HEK293 (cell line): ENCODE measurements at regions of chr22 and their contacts with region 1.

Region 1: DNA sequence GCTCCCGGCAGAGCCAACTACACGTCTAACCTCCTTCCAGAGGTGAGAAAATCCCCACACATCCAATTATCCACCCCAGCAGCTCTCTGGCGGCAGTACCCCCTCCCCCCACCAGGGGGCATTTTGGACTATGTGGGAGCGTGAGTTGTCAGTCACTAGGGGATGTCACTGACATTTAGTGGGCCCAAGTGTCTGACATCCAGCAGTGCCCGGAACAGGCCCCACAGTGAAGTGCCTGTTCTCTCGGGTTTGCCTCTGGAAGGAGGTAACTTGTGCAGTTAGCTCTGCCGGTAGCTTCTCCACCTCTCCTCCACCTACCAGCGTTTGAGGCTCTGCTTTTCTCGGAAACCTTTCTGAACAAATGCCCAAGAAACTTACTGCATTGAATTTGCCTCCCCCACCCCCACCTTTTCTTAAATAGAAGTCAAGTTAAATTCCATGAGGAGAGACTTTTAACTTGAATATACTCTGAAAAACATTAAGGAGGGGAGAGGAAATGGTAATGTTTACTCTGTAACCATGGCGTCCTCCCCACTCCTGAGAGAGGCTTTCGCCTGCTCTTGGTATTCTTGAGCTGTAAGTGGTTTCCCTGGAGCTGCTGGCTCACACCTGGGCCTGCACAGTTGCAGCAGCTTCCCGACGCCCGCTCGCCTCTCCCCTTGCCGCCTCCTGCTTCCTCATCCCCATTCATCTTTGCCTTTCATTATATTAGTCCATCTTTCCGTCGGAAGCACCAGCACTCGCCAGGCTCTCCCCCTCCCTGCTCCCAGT is 112.8 kb downstream of the WNT7B start:
- H3K4me3 ChIP-seq: no peak overlapping the region
- H3K27ac ChIP-seq: no peak overlapping the region
- H3K4me1 ChIP-seq: no peaks in the 10 kb centered on the region
- CTCF ChIP-seq: peak; percentile 83

Region 2: DNA sequence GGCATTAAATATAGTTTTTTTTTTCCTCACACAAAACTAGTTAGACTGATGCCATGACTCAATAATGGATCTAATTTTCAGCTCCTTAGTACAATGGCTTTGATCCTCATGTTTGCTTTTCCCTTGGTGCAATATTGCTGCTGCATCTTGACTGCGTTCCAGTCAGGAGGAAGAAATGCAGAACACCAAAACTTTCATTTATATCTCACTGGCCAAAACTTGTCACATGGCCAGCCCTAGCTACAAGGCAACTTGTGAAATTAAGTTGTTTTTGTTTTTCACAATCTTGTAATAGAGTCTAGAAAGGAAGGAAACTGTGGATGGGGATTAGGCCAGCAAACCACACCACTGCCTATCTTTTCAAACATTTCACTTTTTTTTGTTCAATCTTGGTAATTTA is 487.5 kb before region 1 on chr22:
- CTCF ChIA-PET with region 1: no interaction called
- POLR2A ChIA-PET with region 1: no interaction called
- H3K4me3 ChIP-seq: no peak overlapping the region
- H3K27ac ChIP-seq: no peak overlapping the region
- H3K4me1 ChIP-seq: no peaks in the 10 kb centered on the region
- CTCF ChIP-seq: no peak

Region 3: DNA sequence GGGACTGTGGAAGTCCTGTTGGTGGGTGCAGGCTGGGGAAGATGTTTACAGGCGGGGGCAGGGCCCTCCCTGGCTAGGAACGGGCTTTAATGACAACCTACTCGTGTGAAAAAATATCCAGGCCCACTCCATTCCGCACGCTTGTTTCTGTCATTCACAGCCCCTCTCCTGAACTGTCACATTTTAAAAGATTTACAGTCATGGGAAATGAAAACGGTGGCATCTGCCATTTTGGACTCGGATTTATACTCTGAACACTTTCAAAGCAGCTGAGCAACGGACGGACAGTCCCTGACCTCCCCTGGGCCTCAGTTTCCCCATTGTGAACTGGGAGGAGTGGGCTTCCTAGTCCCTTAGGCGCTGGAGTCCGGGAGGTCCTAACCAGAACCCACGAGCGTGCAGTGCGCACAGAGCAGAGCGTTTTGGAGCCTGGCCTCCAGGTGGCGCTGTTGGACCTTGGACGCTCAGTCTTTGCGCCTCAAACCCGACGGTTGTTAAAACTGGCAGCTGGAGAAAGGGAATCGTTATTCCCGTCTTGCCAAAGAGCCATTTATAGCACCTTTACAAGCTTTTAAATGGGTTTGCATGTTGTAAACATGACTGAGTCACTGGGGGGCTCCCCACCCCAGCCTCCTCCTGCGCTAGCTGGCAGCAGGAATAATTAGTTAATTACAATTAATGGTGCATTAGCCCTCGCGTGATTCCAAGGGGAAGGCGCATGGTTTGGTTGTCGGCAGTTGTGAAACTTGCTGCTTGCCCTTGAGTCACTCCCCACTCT is 286.2 kb before region 1 on chr22:
- CTCF ChIA-PET with region 1: interaction called, 23 read pairs
- POLR2A ChIA-PET with region 1: no interaction called
- H3K4me3 ChIP-seq: no peak overlapping the region
- H3K27ac ChIP-seq: no peak overlapping the region
- H3K4me1 ChIP-seq: no peaks in the 10 kb centered on the region
- CTCF ChIP-seq: peak; percentile 92

Region 4: DNA sequence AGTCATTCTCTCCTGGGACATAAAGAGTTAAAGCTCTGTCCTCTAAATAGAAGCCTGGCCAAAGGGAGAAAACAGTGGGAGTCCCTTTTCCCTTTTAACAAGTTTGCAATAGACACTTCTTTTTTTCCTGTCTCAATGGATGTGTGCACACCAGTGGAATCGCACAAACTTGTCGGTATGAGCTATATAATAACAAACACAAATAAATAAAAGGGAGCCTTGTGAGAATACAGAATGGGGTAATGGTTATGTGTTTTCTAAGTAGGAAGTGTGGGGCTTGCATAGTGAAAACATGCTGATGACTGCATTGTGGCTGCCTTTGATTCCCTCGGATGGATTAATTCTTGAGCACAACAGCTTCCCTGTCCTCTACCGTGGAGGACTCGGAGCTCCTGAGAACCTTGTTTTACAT is 19.1 kb before region 1 on chr22:
- CTCF ChIA-PET with region 1: interaction called, 29 read pairs
- POLR2A ChIA-PET with region 1: no interaction called
- H3K4me3 ChIP-seq: no peak overlapping the region
- H3K27ac ChIP-seq: no peak overlapping the region
- H3K4me1 ChIP-seq: no peaks in the 10 kb centered on the region
- CTCF ChIP-seq: no peak

Region 5: DNA sequence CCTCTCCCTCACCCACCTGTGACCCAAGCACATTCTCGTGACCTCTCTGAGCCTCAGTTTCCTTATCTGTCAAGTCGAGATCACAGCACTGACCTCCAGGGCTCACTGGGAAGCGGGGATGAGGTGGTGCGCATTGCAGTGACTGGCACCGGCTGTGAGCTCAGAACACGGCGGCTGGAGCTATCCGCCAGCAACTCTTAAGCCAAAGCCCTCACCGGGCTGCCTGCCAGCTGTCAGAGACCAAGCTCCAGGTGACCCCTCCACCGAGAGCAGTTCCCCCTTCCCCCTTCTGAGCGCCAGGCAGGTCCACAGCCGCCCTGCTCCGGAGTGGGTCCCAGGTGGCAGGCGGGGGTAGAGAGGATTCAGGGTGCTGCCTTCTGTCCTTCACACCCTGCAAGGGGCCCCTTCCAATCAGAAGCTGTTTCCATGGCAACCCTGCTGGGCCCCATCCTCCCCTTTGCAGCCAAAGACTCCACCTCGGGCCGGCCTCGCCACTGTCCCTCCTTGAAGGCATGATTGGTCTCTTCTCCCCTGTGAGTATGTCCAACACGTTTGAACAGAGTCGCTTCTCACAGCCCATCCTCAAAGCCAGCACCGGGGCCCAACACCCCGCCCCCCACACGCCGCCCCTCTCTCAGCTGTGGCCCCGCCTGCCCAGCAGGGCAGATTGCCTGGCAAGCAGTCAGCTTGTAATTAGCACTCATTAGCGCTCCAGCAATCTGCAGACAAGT is 14.1 kb after region 1 on chr22:
- CTCF ChIA-PET with region 1: interaction called, 68 read pairs
- POLR2A ChIA-PET with region 1: no interaction called
- H3K4me3 ChIP-seq: no peak overlapping the region
- H3K27ac ChIP-seq: no peak overlapping the region
- H3K4me1 ChIP-seq: no peaks in the 10 kb centered on the region
- CTCF ChIP-seq: no peak

Region 6: GRCh38 chr22:45948081-45948648 is 84.0 kb after region 1 on chr22:
- CTCF ChIA-PET with region 1: interaction called, 14 read pairs
- POLR2A ChIA-PET with region 1: no interaction called
- H3K4me3 ChIP-seq: no peak overlapping the region
- H3K27ac ChIP-seq: no peak overlapping the region
- H3K4me1 ChIP-seq: no peaks in the 10 kb centered on the region
- CTCF ChIP-seq: no peak

Region 7: GRCh38 chr22:46108564-46109473 is 244.7 kb after region 1 on chr22:
- CTCF ChIA-PET with region 1: no interaction called
- POLR2A ChIA-PET with region 1: no interaction called
- H3K4me3 ChIP-seq: no peak overlapping the region
- H3K27ac ChIP-seq: no peak overlapping the region
- H3K4me1 ChIP-seq: no peaks in the 10 kb centered on the region
- CTCF ChIP-seq: 0 out of 2 replicates have a peak, but pooled peaks have one; percentile 20